Endothelial cell of umbilical vein (primary cell): ENCODE measurements at regions of chr10 and their contacts with region 1.

Region 1: GRCh38 chr10:115092555-115093285 is 445 bp upstream of the ATRNL1 start:
- DNase-seq: peak; percentile 22
- H3K4me3 ChIP-seq: peak overlapping the region; percentile 48 to 53 (median 51)
- H3K27ac ChIP-seq: no peak overlapping the region
- H3K4me1 ChIP-seq: peaks cover 4% of the 10 kb centered on the region
- H3K27me3 ChIP-seq: peaks cover 30 to 58% of the 10 kb centered on the region in 2 experiments
- CTCF ChIP-seq: no peak
- POLR2A ChIP-seq: no peak

Region 2: DNA sequence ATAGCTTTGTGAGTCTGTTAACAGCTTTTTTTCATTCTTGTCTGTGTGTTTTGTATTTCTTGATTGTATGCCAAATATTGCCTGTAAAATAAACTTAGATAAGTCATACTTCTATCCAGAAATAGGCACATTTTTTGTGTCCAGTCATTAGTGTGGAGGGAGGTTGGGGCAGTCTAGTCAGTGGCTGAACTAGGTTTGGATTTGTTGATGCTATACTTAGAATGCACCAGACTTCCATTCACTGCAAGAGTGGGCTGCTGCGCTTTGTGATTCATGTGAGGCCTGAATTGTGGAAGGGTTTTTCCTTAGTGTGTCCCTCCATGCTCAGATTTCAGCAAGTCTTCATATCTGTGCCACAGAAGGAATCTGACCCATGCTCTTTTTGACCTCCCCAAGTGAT is 104.7 kb before region 1 on chr10:
- CTCF ChIA-PET with region 1: no interaction called
- POLR2A ChIA-PET with region 1: no interaction called
- dilution Hi-C with region 1: no loop called
- intact Hi-C with region 1: loop called (anchors 10 kb)
- DNase-seq: peak; percentile 41
- H3K4me3 ChIP-seq: no peak overlapping the region
- H3K27ac ChIP-seq: no peak overlapping the region
- H3K4me1 ChIP-seq: no peaks in the 10 kb centered on the region
- H3K27me3 ChIP-seq: no peaks in the 10 kb centered on the region
- CTCF ChIP-seq: no peak
- POLR2A ChIP-seq: no peak